Dendritic cell treated with granulocyte-macrophage colony-stimulating factor and Interleukin-4, amounts not matched to agents 40 ng/mL and 50 ng/mL, for 4 days (primary cell): ENCODE measurements at regions of chr5 and their contacts with region 1.

Region 1: GRCh38 chr5:120457839-120458507 is 6.1 kb upstream of the PRR16 start:
- H3K4me3 Mint-ChIP-seq: peak overlapping the region; percentile 61
- H3K27ac Mint-ChIP-seq: peak overlapping the region; percentile 1
- H3K4me1 Mint-ChIP-seq: peaks cover 16% of the 10 kb centered on the region
- H3K27me3 Mint-ChIP-seq: no peaks in the 10 kb centered on the region

Region 2: DNA sequence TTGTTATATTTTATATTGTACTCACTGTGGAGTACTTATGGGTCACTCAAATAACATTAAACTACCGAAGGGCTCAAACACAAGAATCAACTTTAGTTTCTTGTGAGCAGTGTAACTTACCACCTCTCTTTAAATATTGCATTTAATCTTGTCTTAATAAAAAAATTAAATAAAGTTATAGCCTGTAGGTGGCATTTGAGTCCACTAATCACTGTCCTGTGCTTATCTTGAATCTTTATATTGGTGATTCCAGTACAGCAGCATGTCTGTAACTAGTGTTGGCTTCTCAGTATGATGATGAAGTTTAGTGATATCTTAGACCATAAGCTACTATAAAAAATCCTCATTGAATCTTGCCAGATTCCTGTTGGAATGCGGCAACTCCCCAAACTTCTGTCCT is 514.8 kb before region 1 on chr5:
- intact Hi-C with region 1: loop called (anchors 2 kb)
- H3K4me3 Mint-ChIP-seq: no peak overlapping the region
- H3K27ac Mint-ChIP-seq: no peak overlapping the region
- H3K4me1 Mint-ChIP-seq: no peaks in the 10 kb centered on the region
- H3K27me3 Mint-ChIP-seq: no peaks in the 10 kb centered on the region

Region 3: GRCh38 chr5:120327180-120327579 is 130.8 kb before region 1 on chr5:
- intact Hi-C with region 1: loop called (anchors 5 kb)
- H3K4me3 Mint-ChIP-seq: no peak overlapping the region
- H3K27ac Mint-ChIP-seq: no peak overlapping the region
- H3K4me1 Mint-ChIP-seq: no peaks in the 10 kb centered on the region
- H3K27me3 Mint-ChIP-seq: no peaks in the 10 kb centered on the region

Region 4: DNA sequence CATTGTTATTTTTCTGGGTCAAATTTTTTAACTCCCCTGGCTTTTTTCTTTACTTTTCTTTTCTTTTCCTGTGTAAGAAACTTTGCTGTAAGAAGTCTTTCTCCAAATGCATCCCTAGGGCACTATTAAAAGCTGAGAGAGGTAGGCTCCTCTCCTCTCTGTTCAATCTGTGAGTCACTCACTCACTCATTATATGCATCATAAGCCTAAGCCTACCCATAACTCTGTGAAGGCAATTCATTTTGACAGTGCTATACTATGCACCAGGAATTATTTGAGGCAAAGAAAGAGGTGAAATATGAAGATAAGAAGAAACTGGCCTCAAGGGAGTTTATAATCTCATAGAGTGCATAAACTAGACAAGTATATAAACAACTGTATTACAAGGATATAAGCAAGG is 61.8 kb before region 1 on chr5:
- intact Hi-C with region 1: loop called (anchors 2 kb)
- H3K4me3 Mint-ChIP-seq: no peak overlapping the region
- H3K27ac Mint-ChIP-seq: no peak overlapping the region
- H3K4me1 Mint-ChIP-seq: no peaks in the 10 kb centered on the region
- H3K27me3 Mint-ChIP-seq: no peaks in the 10 kb centered on the region